ENCODE measurements at regions of chr11 and their contacts with region 1.

Region 1: GRCh38 chr11:117197516-117198456 is 1.4 kb upstream of the TAGLN start:
- DNase-seq: no peak
- H3K4me3 Mint-ChIP-seq: no peak overlapping the region
- H3K27ac Mint-ChIP-seq: no peak overlapping the region
- H3K4me1 Mint-ChIP-seq: peaks cover 7% of the 10 kb centered on the region
- H3K27me3 Mint-ChIP-seq: no peaks in the 10 kb centered on the region

Region 2: GRCh38 chr11:117178210-117179034 is 19.4 kb before region 1 on chr11 and contains the start of gene SIDT2:
- CTCF ChIA-PET with region 1: interaction called, 15 read pairs
- POLR2A ChIA-PET with region 1: no interaction called
- DNase-seq: peak; percentile 93
- H3K4me3 Mint-ChIP-seq: peak within 1 kb of the TSS; percentile 91
- H3K27ac Mint-ChIP-seq: peak within 1 kb of the TSS; percentile 94
- H3K4me1 Mint-ChIP-seq: peaks cover 31% of the 10 kb centered on the region
- H3K27me3 Mint-ChIP-seq: no peaks in the 10 kb centered on the region
- total RNA-seq, gene SIDT2: 28.6 to 30.9 TPM

Measured in activated CD4-positive, alpha-beta T cell treated with anti-CD3 and anti-CD28 coated beads, Interleukin-2, amount 10 ng/mL, durations not matched to agents 7 days and 5 days (primary cell).